ENCODE measurements at regions of chr2 and their contacts with region 1.

Region 1: GRCh38 chr2:37776487-37776886 is 105.0 kb upstream of the CDC42EP3 start:
- DNase-seq: peak; percentile 29 to 83
- H3K4me3 ChIP-seq: no peak overlapping the region
- H3K27ac ChIP-seq: peak overlapping the region; percentile 87 to 90
- H3K4me1 ChIP-seq: peaks cover 3 to 31% of the 10 kb centered on the region in 2 donors
- H3K27me3 ChIP-seq: no peaks in the 10 kb centered on the region
- CTCF ChIP-seq: no peak

Region 2: DNA sequence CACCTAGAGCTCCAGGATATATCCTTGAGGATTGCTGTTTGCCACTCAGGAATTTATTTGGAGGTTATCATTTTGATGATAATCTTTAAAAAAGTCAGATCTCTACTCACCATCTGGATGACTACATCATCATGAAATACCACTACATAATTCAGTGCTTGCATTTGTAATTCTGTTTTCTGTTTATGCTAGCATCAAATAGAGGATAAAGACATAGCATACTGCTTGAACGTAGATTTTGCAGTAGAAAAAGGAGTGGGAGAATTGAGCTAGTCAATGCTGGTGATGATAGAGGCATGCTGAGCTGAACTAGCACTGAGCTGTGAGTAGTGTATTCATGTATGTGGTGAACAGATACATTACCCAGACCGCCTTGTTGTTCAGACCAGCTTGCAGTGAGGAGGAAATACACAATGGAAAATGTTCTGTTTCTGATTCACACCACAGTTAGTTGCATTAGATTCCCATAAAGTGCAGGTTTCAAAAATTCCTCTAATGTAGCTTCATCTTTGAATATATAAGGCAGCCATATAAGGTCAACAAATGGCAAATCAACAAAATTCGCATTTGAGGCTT is 36.2 kb before region 1 on chr2:
- intact Hi-C with region 1: loop called (anchors 5 kb)
- DNase-seq: no peak
- H3K4me3 ChIP-seq: no peak overlapping the region
- H3K27ac ChIP-seq: no peak overlapping the region
- H3K4me1 ChIP-seq: peaks cover 0 to 24% of the 10 kb centered on the region in 2 donors
- H3K27me3 ChIP-seq: no peaks in the 10 kb centered on the region
- CTCF ChIP-seq: no peak

Region 3: DNA sequence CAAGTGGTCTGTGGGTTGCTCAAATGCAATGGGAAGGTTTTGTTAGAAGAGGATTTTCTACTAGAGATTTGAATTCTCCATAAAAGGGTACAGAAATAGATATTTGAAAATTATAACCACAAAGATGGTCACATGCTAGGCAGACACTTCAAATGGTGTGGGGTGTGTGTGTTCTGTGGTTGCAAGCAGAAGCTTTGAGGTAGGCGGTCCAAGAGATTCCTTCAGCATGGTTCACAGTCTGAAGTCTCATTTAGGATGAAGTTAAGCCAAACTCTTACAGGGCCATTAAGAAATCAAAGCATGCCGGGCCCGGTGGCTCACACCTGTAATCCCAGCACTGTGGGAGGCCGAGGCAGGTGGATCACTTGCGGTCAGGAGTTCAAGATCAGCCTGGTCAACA is 110.3 kb after region 1 on chr2:
- intact Hi-C with region 1: no loop called
- DNase-seq: no peak
- H3K4me3 ChIP-seq: no peak overlapping the region
- H3K27ac ChIP-seq: no peak overlapping the region
- H3K4me1 ChIP-seq: no peaks in the 10 kb centered on the region
- H3K27me3 ChIP-seq: no peaks in the 10 kb centered on the region
- CTCF ChIP-seq: no peak